ENCODE measurements at regions of chr1 and their contacts with region 1.

Region 1: GRCh38 chr1:206693029-206693428 is 8.3 kb downstream of the MAPKAPK2 start:
- DNase-seq: no peak
- H3K4me3 ChIP-seq: peak overlapping the region; percentile 6; the same call in 1 of the 2 replicates
- CTCF ChIP-seq: no peak

Region 2: DNA sequence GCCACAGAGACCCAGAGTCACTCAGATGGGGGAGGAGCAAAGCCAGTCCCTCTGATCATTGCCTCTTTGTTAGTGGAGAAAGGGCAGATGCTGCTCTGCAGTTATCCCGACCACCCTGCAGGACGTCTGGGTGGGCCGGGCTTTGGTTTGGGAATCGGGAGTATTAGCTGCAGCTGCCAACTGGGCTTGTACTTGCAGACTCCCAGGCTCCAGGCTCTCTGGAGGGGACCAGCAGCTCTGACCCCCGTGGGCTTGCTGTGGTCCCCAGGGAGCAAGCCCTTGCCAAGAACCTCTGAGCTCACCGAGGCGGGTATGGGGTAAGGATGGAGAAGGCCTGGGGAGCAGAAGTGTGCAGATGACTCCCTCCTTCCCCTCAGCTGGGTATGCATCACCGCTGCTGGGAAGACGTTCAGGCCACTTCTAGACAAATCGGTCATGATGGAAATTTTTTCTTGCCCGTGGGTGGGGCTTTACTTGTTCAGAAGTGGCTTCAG is 13.3 kb after region 1 on chr1:
- CTCF ChIA-PET with region 1: interaction called, 12 read pairs
- POLR2A ChIA-PET with region 1: interaction called, 4 read pairs
- DNase-seq: peak; percentile 75
- H3K4me3 ChIP-seq: peak overlapping the region; percentile 2
- CTCF ChIP-seq: no peak

Region 3: DNA sequence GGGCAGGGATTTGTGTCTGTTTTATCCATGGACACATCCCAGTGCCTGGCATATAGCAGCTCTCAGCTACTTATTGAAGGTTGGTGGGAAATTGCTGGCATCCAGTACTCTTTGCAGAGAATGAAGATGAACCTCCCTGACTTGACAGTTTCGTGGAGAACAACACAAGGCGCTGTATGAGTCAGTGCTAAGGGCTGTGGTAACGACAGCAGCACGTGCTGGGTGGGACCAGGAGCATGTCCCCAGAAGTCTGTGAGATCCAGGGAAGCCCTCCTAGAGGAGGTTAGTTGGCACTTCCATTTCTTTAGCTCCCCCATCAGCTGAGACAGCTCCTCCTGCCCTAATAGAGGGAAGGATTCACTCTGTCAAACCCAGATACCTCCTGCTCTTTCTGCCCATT is 51.7 kb after region 1 on chr1:
- CTCF ChIA-PET with region 1: no interaction called
- POLR2A ChIA-PET with region 1: no interaction called
- DNase-seq: no peak
- H3K4me3 ChIP-seq: no peak overlapping the region
- CTCF ChIP-seq: no peak

Region 4: DNA sequence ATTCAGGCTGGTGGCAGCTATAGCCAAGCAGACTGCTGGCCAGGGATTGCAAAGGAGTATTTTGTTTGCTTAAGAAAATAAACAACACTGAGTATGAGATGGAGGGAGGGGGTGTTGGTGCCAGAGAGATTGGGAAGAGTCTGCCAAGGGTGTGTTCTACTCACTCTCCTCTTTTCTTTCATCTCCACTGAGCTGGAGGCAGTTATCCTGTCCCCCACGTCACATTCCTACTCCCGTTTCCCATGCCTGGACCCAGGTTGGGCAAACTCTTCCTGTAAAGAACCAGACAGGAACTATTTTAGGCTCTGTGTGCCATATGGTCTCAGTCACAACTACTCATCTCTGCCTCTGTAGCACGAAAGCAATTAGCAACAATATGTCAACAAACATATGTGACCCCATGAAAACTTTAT is 202.8 kb after region 1 on chr1:
- CTCF ChIA-PET with region 1: no interaction called
- POLR2A ChIA-PET with region 1: no interaction called
- DNase-seq: no peak
- H3K4me3 ChIP-seq: no peak overlapping the region
- CTCF ChIP-seq: no peak